Activated naive CD4-positive, alpha-beta T cell treated with anti-CD3 and anti-CD28 coated beads for 36 hours (primary cell): ENCODE measurements at regions of chr5 and their contacts with region 1.

Region 1: DNA sequence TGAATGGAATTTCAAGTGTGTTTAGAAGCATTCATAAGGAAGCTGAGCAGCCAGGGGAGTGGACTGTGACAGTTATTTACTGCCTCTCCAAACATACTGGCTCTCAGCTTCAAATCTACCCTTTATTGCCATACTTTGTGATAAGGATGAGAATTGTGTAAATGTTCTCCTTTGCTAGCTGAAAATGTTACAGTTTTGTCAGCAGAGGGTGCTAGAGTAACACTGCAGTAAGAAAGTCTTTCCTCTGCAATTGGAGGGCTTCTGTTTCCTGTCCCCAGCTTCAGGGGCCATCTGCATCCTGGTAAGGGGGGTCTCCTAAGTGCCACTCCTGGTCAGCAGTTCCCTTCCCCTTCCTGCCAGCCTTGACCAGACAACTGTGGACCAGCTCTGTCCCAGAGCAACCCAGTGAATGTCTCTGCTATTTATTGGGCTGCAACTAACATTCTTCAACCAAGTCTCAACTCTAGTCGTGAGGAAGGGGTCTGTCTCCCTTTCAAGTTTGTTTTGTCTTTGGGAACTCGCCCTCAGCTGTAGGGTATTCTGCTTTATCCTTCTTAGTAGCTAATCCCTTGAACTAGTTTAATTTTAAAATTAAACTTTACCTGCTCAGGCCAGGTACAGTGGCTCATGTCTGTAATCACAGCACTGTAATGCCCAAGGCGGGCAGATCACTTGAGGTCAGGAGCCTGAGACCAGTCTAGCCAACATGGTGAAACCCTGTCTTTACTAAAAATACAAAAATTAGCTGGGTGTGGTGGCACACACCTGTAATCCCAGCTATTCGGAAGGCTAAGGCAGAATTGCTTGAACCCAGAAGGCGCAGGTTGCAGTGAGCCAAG is 45.3 kb downstream of the RAPGEF6 start:
- DNase-seq: no peak
- H3K4me3 Mint-ChIP-seq: no peak overlapping the region
- H3K27ac Mint-ChIP-seq: peak overlapping the region; percentile 58
- H3K4me1 Mint-ChIP-seq: peaks cover 42% of the 10 kb centered on the region
- H3K27me3 Mint-ChIP-seq: no peaks in the 10 kb centered on the region

Region 2: DNA sequence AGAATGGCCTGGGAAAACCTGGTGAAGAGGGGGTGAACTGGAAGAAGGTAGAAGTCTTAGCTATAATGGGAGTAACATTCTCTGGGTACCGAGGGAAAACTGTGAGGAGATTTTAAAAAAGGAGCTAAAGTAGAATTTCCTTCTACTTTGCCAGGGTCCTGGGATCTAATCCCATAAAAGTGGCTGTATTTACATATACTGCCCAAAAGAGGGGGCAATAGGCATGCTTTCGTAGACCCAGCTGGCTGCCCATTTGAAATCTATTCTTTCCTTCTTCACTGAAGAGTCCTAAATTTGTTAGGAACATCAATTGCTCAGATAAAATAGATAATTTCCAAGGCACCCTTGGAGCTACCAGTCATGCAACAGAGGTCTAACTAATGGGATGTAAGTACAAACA is 166.7 kb before region 1 on chr5:
- CTCF ChIA-PET with region 1: interaction called, 12 read pairs
- intact Hi-C with region 1: loop called (anchors 1 kb)
- DNase-seq: no peak
- H3K4me3 Mint-ChIP-seq: no peak overlapping the region
- H3K27ac Mint-ChIP-seq: peak overlapping the region; percentile 48
- H3K4me1 Mint-ChIP-seq: peaks cover 12% of the 10 kb centered on the region
- H3K27me3 Mint-ChIP-seq: no peaks in the 10 kb centered on the region

Region 3: GRCh38 chr5:131563434-131564228 is 26.1 kb before region 1 on chr5:
- CTCF ChIA-PET with region 1: interaction called, 10 read pairs
- intact Hi-C with region 1: no loop called
- DNase-seq: no peak
- H3K4me3 Mint-ChIP-seq: no peak overlapping the region
- H3K27ac Mint-ChIP-seq: no peak overlapping the region
- H3K4me1 Mint-ChIP-seq: peaks cover 67% of the 10 kb centered on the region
- H3K27me3 Mint-ChIP-seq: no peaks in the 10 kb centered on the region

Region 4: DNA sequence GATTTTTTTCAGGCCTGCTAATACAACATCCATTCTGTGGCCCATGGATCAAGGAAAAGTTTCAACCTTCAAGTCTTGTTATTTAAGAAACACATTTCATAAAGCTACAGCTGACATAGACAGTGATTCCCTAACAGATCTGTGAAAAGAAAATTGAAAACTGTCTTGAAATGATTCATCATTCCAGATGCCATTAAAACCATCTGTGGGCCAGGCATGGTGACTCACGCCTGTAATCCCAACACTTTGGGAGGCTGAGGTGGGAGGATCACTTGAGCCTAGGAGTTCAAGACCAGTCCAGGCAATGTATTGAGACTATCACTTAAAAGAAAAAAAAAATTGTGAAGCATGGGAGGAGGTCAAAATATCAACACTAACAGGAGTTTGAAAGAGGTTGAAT is 39.3 kb after region 1 on chr5:
- CTCF ChIA-PET with region 1: interaction called, 32 read pairs
- intact Hi-C with region 1: no loop called
- DNase-seq: no peak
- H3K4me3 Mint-ChIP-seq: peak overlapping the region; percentile 30
- H3K27ac Mint-ChIP-seq: peak overlapping the region; percentile 54
- H3K4me1 Mint-ChIP-seq: peaks cover 49% of the 10 kb centered on the region
- H3K27me3 Mint-ChIP-seq: no peaks in the 10 kb centered on the region

Region 5: DNA sequence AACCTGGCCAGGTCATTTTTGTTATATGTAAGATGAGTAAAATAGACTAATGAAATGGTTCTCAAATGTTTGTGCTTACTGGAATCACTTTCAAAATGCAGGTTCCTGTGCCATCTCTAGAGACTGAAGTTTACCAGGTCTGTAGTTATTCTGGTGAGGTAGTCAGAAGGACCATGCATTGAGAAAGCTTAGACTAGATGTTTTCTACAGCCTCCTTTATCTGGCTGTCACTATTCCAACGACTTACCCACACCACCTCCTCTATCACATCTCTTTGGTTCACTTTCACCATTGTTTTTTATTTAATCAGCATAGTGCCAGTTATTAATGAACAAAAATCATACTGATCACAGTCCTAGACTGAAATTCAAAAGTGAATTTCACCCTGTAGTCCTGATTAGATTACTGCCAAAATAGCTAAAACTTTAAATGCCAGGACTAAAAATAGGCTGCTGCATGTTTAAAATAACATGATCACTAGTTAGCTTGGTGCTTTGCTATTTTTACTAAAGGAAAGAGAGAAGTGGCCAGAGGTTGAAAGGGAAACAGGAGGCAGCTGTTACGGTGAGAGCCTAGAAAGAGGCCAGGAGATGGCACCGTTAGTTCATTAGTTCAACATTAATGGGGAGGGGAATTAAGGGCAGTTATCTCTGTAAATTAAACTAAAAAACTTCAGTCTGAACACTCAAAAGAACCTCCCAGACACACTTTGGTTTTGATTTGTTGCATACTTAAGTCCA is 221.0 kb after region 1 on chr5:
- CTCF ChIA-PET with region 1: interaction called, 3 read pairs
- intact Hi-C with region 1: loop called (anchors 1 kb)
- DNase-seq: peak; percentile 31
- H3K4me3 Mint-ChIP-seq: no peak overlapping the region
- H3K27ac Mint-ChIP-seq: no peak overlapping the region
- H3K4me1 Mint-ChIP-seq: no peaks in the 10 kb centered on the region
- H3K27me3 Mint-ChIP-seq: no peaks in the 10 kb centered on the region

Region 6: DNA sequence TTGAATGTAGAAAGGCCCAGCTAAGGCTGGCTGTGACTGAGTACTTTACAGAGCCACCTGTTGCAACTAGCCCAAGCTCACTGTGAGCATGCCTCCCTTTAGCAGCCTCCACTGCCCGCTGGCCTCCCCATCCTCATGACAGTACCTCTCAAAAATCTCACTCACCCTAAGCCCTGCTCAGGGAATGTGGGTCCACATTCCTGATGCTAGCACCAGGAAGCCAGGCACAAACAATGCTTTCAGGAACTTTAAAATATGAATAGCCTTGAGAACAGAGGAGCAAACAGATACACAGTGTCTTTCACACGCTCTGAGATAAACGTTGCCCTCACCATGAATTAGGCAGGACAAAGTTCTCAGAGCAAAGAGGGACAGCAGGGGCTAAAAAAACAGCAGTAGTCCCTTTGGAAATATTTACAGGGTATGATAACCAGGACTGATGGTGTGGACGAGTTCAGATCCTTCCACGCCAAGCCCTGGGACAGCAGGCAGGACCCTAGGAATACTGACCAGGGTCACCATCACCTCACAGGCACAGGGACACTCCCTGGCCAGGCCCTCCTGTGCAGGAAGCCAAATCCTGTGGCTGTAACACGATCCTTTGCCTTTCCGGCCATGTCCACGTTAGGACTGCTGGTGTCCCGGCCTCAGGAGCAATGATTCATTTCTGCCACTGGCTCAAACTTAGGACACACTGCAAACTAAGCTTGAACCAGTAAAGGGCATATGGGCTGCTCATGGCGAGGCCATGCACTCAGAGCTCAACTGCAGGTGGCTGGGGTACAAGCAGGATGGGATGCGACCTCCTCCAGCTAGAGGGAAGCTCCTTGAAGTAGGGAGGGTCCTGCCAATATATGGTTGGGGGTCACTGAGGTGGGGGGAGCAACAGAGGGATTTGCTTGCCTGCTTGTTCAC is 412.2 kb after region 1 on chr5:
- CTCF ChIA-PET with region 1: interaction called, 130 read pairs
- intact Hi-C with region 1: no loop called
- DNase-seq: no peak
- H3K4me3 Mint-ChIP-seq: no peak overlapping the region
- H3K27ac Mint-ChIP-seq: no peak overlapping the region
- H3K4me1 Mint-ChIP-seq: peaks cover 42% of the 10 kb centered on the region
- H3K27me3 Mint-ChIP-seq: no peaks in the 10 kb centered on the region

Region 7: DNA sequence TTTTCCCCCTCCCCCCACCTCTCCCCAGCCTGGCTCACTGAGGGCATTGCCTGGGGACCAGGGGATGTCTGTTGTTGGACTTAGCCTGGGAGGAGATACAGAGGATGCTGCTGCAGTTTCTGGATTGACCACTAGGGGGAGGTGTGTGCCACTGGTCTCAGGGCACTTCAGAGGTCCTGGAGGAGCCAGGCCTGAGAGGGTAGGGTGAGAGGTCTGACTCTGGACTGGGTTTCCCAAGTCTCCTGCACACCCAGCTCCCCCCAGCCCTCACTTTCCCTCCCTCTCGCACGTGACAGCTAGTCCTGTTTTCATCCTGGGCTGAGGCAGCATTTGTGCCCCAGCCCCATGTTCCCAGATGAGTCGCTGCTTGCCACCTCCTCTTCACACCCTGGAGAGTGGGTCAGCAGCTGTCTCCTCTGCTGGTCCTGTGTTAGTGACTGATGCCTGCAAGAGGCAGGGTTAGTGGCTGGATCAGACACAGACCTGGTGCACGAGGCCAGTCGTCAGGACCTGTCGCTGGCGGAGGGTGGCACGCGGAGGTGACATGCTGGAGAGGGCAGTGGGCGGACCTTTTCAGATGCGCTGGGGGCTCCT is 475.1 kb after region 1 on chr5:
- CTCF ChIA-PET with region 1: interaction called, 14 read pairs
- intact Hi-C with region 1: loop called (anchors 1 kb)
- DNase-seq: peak; percentile 91
- H3K4me3 Mint-ChIP-seq: no peak overlapping the region
- H3K27ac Mint-ChIP-seq: no peak overlapping the region
- H3K4me1 Mint-ChIP-seq: peaks cover 13% of the 10 kb centered on the region
- H3K27me3 Mint-ChIP-seq: no peaks in the 10 kb centered on the region